ENCODE measurements at regions of chr14 and their contacts with region 1.

Region 1: DNA sequence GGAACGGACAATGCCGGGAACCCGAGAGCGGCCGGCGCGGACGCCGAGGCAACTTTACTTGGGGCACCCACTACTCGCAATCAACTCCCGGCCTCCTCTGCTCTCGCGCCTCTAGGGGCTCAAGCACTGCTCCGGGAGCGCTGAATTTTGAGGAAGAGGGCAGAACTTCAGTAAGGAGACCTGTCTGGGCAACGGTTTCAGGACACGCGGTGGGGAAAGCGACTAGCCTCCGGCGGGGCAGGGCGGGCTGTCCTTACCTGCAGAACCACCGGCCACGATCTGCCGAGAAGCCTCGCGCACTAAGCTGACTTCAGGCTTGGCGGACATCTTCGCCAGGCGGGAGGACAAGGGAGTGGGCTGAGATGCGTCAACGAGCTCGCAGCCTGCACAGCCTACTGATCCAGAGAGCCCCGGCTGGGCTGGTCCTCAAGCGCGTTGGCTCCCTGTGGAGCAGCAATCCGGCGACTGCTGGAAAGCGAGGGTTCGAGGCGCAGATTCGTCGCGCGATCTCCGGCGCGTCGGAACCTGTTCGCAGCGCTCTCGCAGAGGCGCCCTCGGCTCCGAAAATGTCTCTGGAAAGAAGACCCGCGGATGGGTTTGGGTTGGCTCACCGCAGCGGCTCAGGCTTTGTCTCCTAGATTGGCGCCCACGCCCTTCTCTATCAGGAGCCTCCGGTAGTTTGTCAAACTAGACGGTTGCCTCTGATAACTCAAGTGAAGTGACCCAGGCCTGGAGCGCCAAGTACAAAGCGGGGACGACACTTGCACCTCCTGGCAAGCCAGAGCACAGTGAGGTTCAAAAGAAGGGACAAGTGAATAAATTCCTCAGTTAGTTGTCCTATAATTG is at the start of gene SLC25A21:
- DNase-seq: peak; percentile 83 to 85
- H3K4me3 ChIP-seq: peak within 1 kb of the TSS; percentile 86
- H3K4me3 Mint-ChIP-seq: peak within 1 kb of the TSS; percentile 90
- H3K27ac Mint-ChIP-seq: peak within 1 kb of the TSS; percentile 97
- H3K4me1 ChIP-seq: peaks cover 18% of the 10 kb centered on the region
- H3K4me1 Mint-ChIP-seq: peaks cover 7% of the 10 kb centered on the region
- H3K27me3 ChIP-seq: no peaks in the 10 kb centered on the region
- H3K27me3 Mint-ChIP-seq: no peaks in the 10 kb centered on the region
- CTCF ChIP-seq: peak in 1 of 2 experiments; percentile 34
- total RNA-seq, gene SLC25A21: 3.2 and 3.6 TPM in 2 replicates

Region 2: GRCh38 chr14:37197421-37198272 is 25.4 kb after region 1 on chr14 and contains the start of gene MIPOL1:
- CTCF ChIA-PET with region 1: no interaction called
- POLR2A ChIA-PET with region 1: interaction called, 4 read pairs
- intact Hi-C with region 1: loop called (anchors 1 kb)
- DNase-seq: peak; percentile 83 to 86
- H3K4me3 ChIP-seq: peak within 1 kb of the TSS; percentile 73
- H3K4me3 Mint-ChIP-seq: peak within 1 kb of the TSS; percentile 98
- H3K27ac Mint-ChIP-seq: peak within 1 kb of the TSS; percentile 98
- H3K4me1 ChIP-seq: peaks cover 13% of the 10 kb centered on the region; the same call in 1 of the 2 replicates
- H3K4me1 Mint-ChIP-seq: peaks cover 18% of the 10 kb centered on the region
- H3K27me3 ChIP-seq: no peaks in the 10 kb centered on the region
- H3K27me3 Mint-ChIP-seq: no peaks in the 10 kb centered on the region
- CTCF ChIP-seq: peak in 1 of 2 experiments; percentile 52
- total RNA-seq, gene MIPOL1: 18.7 and 20.9 TPM in 2 replicates

Measured in Caco-2 (cell line).